Motor neuron (in vitro differentiated cells): ENCODE measurements at regions of chr6 and their contacts with region 1.

Region 1: DNA sequence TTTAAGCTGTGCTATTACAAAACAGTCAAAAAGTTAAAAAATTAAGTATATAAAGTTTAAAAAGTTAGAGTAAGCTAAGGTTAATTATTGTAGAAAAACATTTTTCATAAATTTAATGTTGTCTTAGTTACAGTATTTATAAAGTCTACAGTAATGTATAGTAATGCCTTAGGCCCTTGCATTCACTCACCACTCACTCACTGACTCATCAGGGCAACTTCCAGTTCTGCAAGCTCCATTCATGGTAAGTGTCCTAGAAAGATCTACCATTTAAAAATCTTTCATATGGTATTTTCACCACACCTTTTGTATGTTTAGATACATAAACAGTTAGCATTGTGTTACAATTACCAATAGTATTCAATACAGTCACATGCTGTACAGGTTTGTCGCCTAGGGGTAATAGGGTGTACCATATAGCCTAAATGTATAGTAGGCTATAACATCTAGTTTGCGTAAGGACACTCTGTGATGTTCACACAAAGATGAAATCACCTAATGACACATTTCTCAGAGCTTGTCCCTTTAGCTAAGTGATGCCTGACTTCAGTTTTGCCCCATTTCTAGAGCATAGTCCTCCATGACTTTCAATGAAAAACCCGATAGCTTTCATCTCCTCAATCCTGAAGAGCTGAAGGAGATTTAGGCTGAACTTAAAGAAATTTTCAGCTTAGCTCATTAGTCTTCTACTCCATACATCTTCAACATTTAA is 14.9 kb upstream of the HLA-DRA start:
- ATAC-seq: no peak
- H3K4me3 ChIP-seq: no peak overlapping the region
- H3K27ac ChIP-seq: no peak overlapping the region
- H3K4me1 ChIP-seq: no peaks in the 10 kb centered on the region

Region 2: GRCh38 chr6:32244946-32245398 is 179.8 kb before region 1 on chr6:
- in situ Hi-C with region 1: no loop called
- ATAC-seq: peak; percentile 82 to 96 (median 88)
- H3K4me3 ChIP-seq: no peak overlapping the region
- H3K27ac ChIP-seq: no peak overlapping the region
- H3K4me1 ChIP-seq: no peaks in the 10 kb centered on the region

Region 3: GRCh38 chr6:32692019-32692418 is 267.3 kb after region 1 on chr6:
- in situ Hi-C with region 1: loop called in 3 of 9 experiments (anchors 10 to 25 kb)
- ATAC-seq: no peak
- H3K4me3 ChIP-seq: no peak overlapping the region
- H3K27ac ChIP-seq: no peak overlapping the region
- H3K4me1 ChIP-seq: no peaks in the 10 kb centered on the region

Region 4: GRCh38 chr6:32718879-32719278 is 294.1 kb after region 1 on chr6:
- in situ Hi-C with region 1: loop called in 2 of 9 experiments (anchors 10 to 25 kb)
- ATAC-seq: no peak
- H3K4me3 ChIP-seq: no peak overlapping the region
- H3K27ac ChIP-seq: no peak overlapping the region
- H3K4me1 ChIP-seq: no peaks in the 10 kb centered on the region